Caco-2 (cell line): ENCODE measurements at regions of chr11 and their contacts with region 1.

Region 1: DNA sequence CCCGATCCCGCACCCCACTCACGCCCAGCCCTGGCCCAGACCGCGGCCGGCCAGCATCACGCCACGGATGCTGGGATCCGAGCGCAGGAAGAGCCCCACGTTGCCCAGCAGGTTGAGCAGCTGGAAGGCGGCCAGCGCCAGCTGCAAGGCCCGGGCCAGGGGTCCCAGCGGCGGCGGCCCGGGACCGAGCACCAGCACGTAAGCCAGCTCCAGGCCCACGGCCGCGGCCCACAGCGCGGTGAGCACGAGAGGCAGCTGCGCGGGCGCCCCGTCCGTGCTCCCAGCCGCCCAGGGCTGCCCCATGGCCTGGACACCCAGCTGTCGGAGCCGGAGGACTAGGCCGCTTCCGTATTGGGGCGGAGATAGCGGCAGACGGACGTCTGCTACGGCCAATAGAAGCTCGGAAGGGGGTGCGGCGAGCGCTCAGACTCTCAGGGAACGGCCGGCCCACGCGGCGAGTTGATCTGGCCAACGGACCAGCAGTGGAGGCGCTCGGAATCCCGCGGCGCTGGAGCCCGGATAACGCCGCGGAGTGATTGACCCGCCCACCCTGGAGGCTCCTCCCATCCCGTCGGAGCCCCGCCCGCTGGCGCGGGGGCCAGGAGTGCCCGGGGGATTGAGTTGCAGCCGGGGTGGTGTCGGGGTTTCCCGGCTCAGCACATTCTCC is at the start of gene ZDHHC24:
- DNase-seq: peak; percentile 99
- H3K4me3 ChIP-seq: peak within 1 kb of the TSS; percentile 59
- H3K4me3 Mint-ChIP-seq: peak within 1 kb of the TSS; percentile 84
- H3K27ac Mint-ChIP-seq: peak within 1 kb of the TSS; percentile 60
- H3K4me1 ChIP-seq: peaks cover 22% of the 10 kb centered on the region
- H3K4me1 Mint-ChIP-seq: peaks cover 15% of the 10 kb centered on the region
- H3K27me3 ChIP-seq: no peaks in the 10 kb centered on the region
- H3K27me3 Mint-ChIP-seq: no peaks in the 10 kb centered on the region
- CTCF ChIP-seq: no peak
- total RNA-seq, gene ZDHHC24: 25.1 and 26.9 TPM in 2 replicates

Region 2: DNA sequence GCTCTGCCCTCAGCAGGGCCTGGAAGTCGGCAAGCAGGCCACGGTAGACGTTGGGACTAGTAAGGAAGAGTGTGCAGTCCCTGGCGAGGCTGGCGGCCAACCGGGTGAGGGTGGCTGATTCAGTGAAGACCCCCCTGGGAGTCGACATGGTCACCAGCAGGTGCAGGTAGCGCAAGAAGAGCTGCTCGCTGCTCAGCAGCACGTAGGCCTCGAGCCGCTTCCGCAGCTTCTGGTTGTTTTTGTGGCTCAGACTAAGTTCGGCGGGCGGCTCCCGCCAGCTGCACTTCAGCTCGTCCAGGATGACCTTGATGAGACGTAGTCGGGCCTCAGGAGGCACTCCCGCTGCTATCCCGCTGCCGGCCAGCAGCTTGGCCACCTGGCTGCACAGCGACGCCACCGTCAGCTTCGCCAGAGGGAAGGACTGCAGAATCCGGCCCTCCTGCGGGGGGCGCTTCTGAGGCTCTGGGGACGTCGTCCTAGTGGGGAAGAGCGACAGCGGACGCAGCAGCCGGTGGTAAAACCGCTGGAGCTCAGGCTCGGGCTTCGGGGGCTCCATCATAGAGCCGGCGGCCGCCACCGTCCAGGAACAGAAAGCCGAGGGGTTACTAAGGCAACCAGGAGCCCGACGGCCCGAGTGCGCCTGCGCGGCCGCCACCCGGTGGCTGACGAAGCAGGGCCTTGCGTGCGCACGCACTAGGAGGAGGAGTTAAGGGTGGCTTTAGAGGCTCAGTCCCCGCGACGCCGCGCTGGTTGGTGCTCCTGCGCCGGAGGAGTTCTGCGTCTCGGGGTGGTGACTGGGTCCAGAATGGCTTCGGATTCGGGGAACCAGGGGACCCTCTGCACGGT is 46.8 kb after region 1 on chr11 and contains the starts of genes CCDC87 and CCS:
- CTCF ChIA-PET with region 1: interaction called, 12 read pairs
- POLR2A ChIA-PET with region 1: interaction called, 13 read pairs
- intact Hi-C with region 1: loop called (anchors 5 kb)
- DNase-seq: peak; percentile 99 to 100
- H3K4me3 ChIP-seq: peak within 1 kb of the TSS; percentile 68
- H3K4me3 Mint-ChIP-seq: peak within 1 kb of the TSS; percentile 79
- H3K27ac Mint-ChIP-seq: peak within 1 kb of the TSS; percentile 90
- H3K4me1 ChIP-seq: peaks cover 23% of the 10 kb centered on the region
- H3K4me1 Mint-ChIP-seq: peaks cover 6% of the 10 kb centered on the region
- H3K27me3 ChIP-seq: no peaks in the 10 kb centered on the region
- H3K27me3 Mint-ChIP-seq: no peaks in the 10 kb centered on the region
- CTCF ChIP-seq: peak; percentile 93 to 99
- total RNA-seq, gene CCDC87: 1.0 TPM in 2 replicates
- total RNA-seq, gene CCS: 52.9 and 54.0 TPM in 2 replicates

Region 3: GRCh38 chr11:66609721-66610617 is 64.1 kb after region 1 on chr11:
- CTCF ChIA-PET with region 1: no interaction called
- POLR2A ChIA-PET with region 1: interaction called, 14 read pairs
- intact Hi-C with region 1: loop called (anchors 5 kb)
- DNase-seq: no peak
- H3K4me3 ChIP-seq: no peak overlapping the region
- H3K4me3 Mint-ChIP-seq: no peak overlapping the region
- H3K27ac Mint-ChIP-seq: no peak overlapping the region
- H3K4me1 ChIP-seq: no peaks in the 10 kb centered on the region
- H3K4me1 Mint-ChIP-seq: no peaks in the 10 kb centered on the region
- H3K27me3 ChIP-seq: no peaks in the 10 kb centered on the region
- H3K27me3 Mint-ChIP-seq: no peaks in the 10 kb centered on the region
- CTCF ChIP-seq: no peak